Endothelial cell of umbilical vein (primary cell): ENCODE measurements at regions of chr13 and their contacts with region 1.

Region 1: GRCh38 chr13:34300559-34300958 is 482.6 kb downstream of the RFC3 start:
- DNase-seq: no peak
- H3K4me3 ChIP-seq: no peak overlapping the region
- H3K27ac ChIP-seq: no peak overlapping the region
- H3K4me1 ChIP-seq: no peaks in the 10 kb centered on the region
- H3K27me3 ChIP-seq: no peaks in the 10 kb centered on the region
- CTCF ChIP-seq: no peak
- POLR2A ChIP-seq: no peak

Region 2: GRCh38 chr13:34277936-34278335 is 22.6 kb before region 1 on chr13:
- CTCF ChIA-PET with region 1: no interaction called
- POLR2A ChIA-PET with region 1: no interaction called
- dilution Hi-C with region 1: no loop called
- intact Hi-C with region 1: no loop called
- DNase-seq: peak; percentile 23
- H3K4me3 ChIP-seq: no peak overlapping the region
- H3K27ac ChIP-seq: no peak overlapping the region
- H3K4me1 ChIP-seq: no peaks in the 10 kb centered on the region
- H3K27me3 ChIP-seq: no peaks in the 10 kb centered on the region
- CTCF ChIP-seq: no peak
- POLR2A ChIP-seq: no peak

Region 3: GRCh38 chr13:34421347-34421719 is 120.8 kb after region 1 on chr13:
- CTCF ChIA-PET with region 1: no interaction called
- POLR2A ChIA-PET with region 1: no interaction called
- dilution Hi-C with region 1: no loop called
- intact Hi-C with region 1: loop called (anchors 10 kb)
- DNase-seq: no peak
- H3K4me3 ChIP-seq: no peak overlapping the region
- H3K27ac ChIP-seq: no peak overlapping the region
- H3K4me1 ChIP-seq: no peaks in the 10 kb centered on the region
- H3K27me3 ChIP-seq: no peaks in the 10 kb centered on the region
- CTCF ChIP-seq: peak in 1 of 2 donors; percentile 9
- POLR2A ChIP-seq: no peak